ENCODE measurements at regions of chr11 and their contacts with region 1.

Region 1: GRCh38 chr11:62591448-62592145 is at the start of gene TUT1:
- DNase-seq: peak; percentile 81 to 99 (median 86)
- ATAC-seq: peak; percentile 91
- H3K4me3 ChIP-seq: peak within 1 kb of the TSS; percentile 63
- H3K27ac ChIP-seq: peak within 1 kb of the TSS; percentile 90
- H3K4me1 ChIP-seq: peaks cover 24 to 25% of the 10 kb centered on the region in 2 experiments
- H3K27me3 ChIP-seq: no peaks in the 10 kb centered on the region
- CTCF ChIP-seq: peak; percentile 1 to 6 (median 1); a peak in 1 of 6 replicates
- EP300 ChIP-seq: peak; percentile 79
- POLR2A ChIP-seq: peak; percentile 98
- RAD21 ChIP-seq: peak in 1 of 2 experiments; percentile 2; a peak in 1 of 4 replicates
- polyA plus RNA-seq, gene TUT1: 0.66 to 1.5 TPM

Region 2: GRCh38 chr11:62556108-62556871 is 35.3 kb before region 1 on chr11:
- CTCF ChIA-PET with region 1: no interaction called
- POLR2A ChIA-PET with region 1: interaction called, 13 read pairs
- in situ Hi-C with region 1: no loop called
- intact Hi-C with region 1: no loop called
- DNase-seq: peak; percentile 56 to 79 (median 69)
- ATAC-seq: peak; percentile 54
- H3K4me3 ChIP-seq: no peak overlapping the region
- H3K27ac ChIP-seq: peak overlapping the region; percentile 73
- H3K4me1 ChIP-seq: peaks cover 65 to 72% of the 10 kb centered on the region in 2 experiments
- H3K27me3 ChIP-seq: no peaks in the 10 kb centered on the region
- CTCF ChIP-seq: no peak
- EP300 ChIP-seq: no peak; the same call in 1 of the 2 replicates
- POLR2A ChIP-seq: no peak
- RAD21 ChIP-seq: no peak; a peak in 1 of 4 replicates

Region 3: GRCh38 chr11:62573592-62574362 is 17.8 kb before region 1 on chr11 and contains the start of gene EEF1G:
- CTCF ChIA-PET with region 1: no interaction called
- POLR2A ChIA-PET with region 1: interaction called, 34 read pairs
- in situ Hi-C with region 1: no loop called
- intact Hi-C with region 1: no loop called
- DNase-seq: peak; percentile 97 to 99 (median 98)
- ATAC-seq: peak; percentile 97
- H3K4me3 ChIP-seq: peak within 1 kb of the TSS; percentile 96
- H3K27ac ChIP-seq: peak within 1 kb of the TSS; percentile 88
- H3K4me1 ChIP-seq: peaks cover 22 to 40% of the 10 kb centered on the region in 2 experiments; a peak in 4 of 5 replicates
- H3K27me3 ChIP-seq: no peaks in the 10 kb centered on the region
- CTCF ChIP-seq: no peak
- EP300 ChIP-seq: no peak
- POLR2A ChIP-seq: peak; percentile 97
- RAD21 ChIP-seq: no peak
- polyA plus RNA-seq, gene EEF1G: 985 to 1,460 TPM

Region 4: GRCh38 chr11:62621567-62622470 is 30.2 kb after region 1 on chr11 and contains the start of gene B3GAT3:
- CTCF ChIA-PET with region 1: no interaction called
- POLR2A ChIA-PET with region 1: interaction called, 12 read pairs
- in situ Hi-C with region 1: no loop called
- intact Hi-C with region 1: no loop called
- DNase-seq: peak; percentile 97 to 99 (median 98)
- ATAC-seq: peak; percentile 98
- H3K4me3 ChIP-seq: peak within 1 kb of the TSS; percentile 73
- H3K27ac ChIP-seq: peak within 1 kb of the TSS; percentile 84
- H3K4me1 ChIP-seq: peaks cover 12 to 13% of the 10 kb centered on the region in 2 experiments; a peak in 4 of 5 replicates
- H3K27me3 ChIP-seq: no peaks in the 10 kb centered on the region
- CTCF ChIP-seq: peak in 2 of 3 experiments; percentile 8 to 28; a peak in 1 of 6 replicates
- EP300 ChIP-seq: no peak; the same call in 1 of the 2 replicates
- POLR2A ChIP-seq: peak; percentile 79
- RAD21 ChIP-seq: no peak
- polyA plus RNA-seq, gene B3GAT3: 0.30 to 3.3 TPM

Region 5: GRCh38 chr11:62694455-62695167 is 103.0 kb after region 1 on chr11:
- CTCF ChIA-PET with region 1: interaction called, 3 read pairs
- POLR2A ChIA-PET with region 1: interaction called, 4 read pairs
- in situ Hi-C with region 1: no loop called
- intact Hi-C with region 1: loop called (anchors 5 kb)
- DNase-seq: peak; percentile 73 to 90 (median 78)
- ATAC-seq: peak; percentile 98
- H3K4me3 ChIP-seq: no peak overlapping the region
- H3K27ac ChIP-seq: no peak overlapping the region; the same call in 2 of the 3 replicates
- H3K4me1 ChIP-seq: no peaks in the 10 kb centered on the region
- H3K27me3 ChIP-seq: no peaks in the 10 kb centered on the region
- CTCF ChIP-seq: peak; percentile 87 to 90 (median 87)
- EP300 ChIP-seq: no peak
- POLR2A ChIP-seq: no peak
- RAD21 ChIP-seq: peak; percentile 77 to 84

Region 6: GRCh38 chr11:62771144-62772021 is 179.8 kb after region 1 on chr11 and contains the start of gene TAF6L:
- CTCF ChIA-PET with region 1: interaction called, 3 read pairs
- POLR2A ChIA-PET with region 1: no interaction called
- in situ Hi-C with region 1: no loop called
- intact Hi-C with region 1: loop called (anchors 5 kb)
- DNase-seq: peak; percentile 97 to 99 (median 98)
- ATAC-seq: peak; percentile 95
- H3K4me3 ChIP-seq: peak within 1 kb of the TSS; percentile 48
- H3K27ac ChIP-seq: peak within 1 kb of the TSS; percentile 88
- H3K4me1 ChIP-seq: peaks cover 9 to 24% of the 10 kb centered on the region in 2 experiments
- H3K27me3 ChIP-seq: no peaks in the 10 kb centered on the region
- CTCF ChIP-seq: no peak; a peak in 1 of 6 replicates
- EP300 ChIP-seq: no peak; the same call in 1 of the 2 replicates
- POLR2A ChIP-seq: peak; percentile 86
- RAD21 ChIP-seq: peak in 1 of 2 experiments; percentile 20; a peak in 2 of 4 replicates
- polyA plus RNA-seq, gene TAF6L: 0.04 to 0.25 TPM

Region 7: DNA sequence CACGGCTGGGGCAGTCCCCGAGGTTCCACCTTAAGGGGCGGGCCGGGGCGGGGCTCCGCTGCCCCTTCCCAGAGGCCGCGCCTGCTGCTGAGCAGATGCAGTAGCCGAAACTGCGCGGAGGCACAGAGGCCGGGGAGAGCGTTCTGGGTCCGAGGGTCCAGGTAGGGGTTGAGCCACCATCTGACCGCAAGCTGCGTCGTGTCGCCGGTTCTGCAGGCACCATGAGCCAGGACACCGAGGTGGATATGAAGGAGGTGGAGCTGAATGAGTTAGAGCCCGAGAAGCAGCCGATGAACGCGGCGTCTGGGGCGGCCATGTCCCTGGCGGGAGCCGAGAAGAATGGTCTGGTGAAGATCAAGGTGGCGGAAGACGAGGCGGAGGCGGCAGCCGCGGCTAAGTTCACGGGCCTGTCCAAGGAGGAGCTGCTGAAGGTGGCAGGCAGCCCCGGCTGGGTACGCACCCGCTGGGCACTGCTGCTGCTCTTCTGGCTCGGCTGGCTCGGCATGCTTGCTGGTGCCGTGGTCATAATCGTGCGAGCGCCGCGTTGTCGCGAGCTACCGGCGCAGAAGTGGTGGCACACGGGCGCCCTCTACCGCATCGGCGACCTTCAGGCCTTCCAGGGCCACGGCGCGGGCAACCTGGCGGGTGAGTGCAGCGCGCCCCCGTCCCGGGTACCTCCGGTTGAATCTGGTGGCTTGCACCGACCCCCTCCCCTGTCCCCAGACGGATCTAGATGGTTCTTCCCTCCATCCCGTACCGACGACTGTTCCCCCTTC is 289.4 kb after region 1 on chr11 and contains the start of gene SLC3A2:
- CTCF ChIA-PET with region 1: no interaction called
- POLR2A ChIA-PET with region 1: interaction called, 3 read pairs
- in situ Hi-C with region 1: no loop called
- intact Hi-C with region 1: loop called (anchors 10 kb)
- DNase-seq: peak; percentile 83 to 95 (median 86)
- ATAC-seq: peak; percentile 88
- H3K4me3 ChIP-seq: peak within 1 kb of the TSS; percentile 56
- H3K27ac ChIP-seq: peak within 1 kb of the TSS; percentile 95
- H3K4me1 ChIP-seq: peaks cover 56 to 58% of the 10 kb centered on the region in 2 experiments
- H3K27me3 ChIP-seq: no peaks in the 10 kb centered on the region
- CTCF ChIP-seq: peak; percentile 72 to 80 (median 77)
- EP300 ChIP-seq: no peak
- POLR2A ChIP-seq: peak; percentile 99
- RAD21 ChIP-seq: peak; percentile 24 to 43; a peak in 2 of 4 replicates
- polyA plus RNA-seq, gene SLC3A2: 20.0 to 39.7 TPM